Heart left ventricle (tissue), 16 donors: ENCODE measurements at regions of chr3 and their contacts with region 1.

Region 1: DNA sequence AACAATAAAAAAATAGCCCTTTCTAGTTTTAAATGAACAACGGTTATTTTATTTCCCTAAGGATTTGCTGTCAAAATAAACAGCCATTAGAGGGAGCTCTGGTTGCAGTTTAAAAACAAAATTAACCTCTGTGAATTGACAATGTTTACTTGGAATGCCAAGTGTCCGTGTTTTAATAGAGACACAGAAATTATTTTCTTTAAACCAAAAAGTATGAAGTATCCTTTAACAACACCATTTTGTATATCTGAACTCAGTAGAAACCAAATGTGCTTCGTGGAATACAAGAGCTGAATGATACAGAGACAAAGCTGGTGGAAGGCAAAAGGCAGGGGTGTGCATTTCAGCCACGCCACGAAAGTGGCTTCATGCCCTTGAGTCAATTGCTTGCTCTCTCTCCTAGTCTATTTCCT is 74.4 kb downstream of the MOBP start:
- DNase-seq: no peak
- ATAC-seq: no peak
- H3K4me3 ChIP-seq: peak overlapping the region in 4 of 12 donors; percentile 17 to 32 (median 22)
- H3K27ac ChIP-seq: no peak overlapping the region
- H3K4me1 ChIP-seq: peaks cover 0 to 8% (median 0%) of the 10 kb centered on the region in 12 donors
- H3K27me3 ChIP-seq: no peaks in the 10 kb centered on the region
- CTCF ChIP-seq: peak in 11 of 12 donors; percentile 25 to 59 (median 52)
- POLR2A ChIP-seq: no peak

Region 2: GRCh38 chr3:39707314-39707909 is 165.5 kb after region 1 on chr3:
- intact Hi-C with region 1: loop called in 1 of 10 experiments (anchors 5 kb)
- DNase-seq: no peak
- ATAC-seq: no peak
- H3K4me3 ChIP-seq: no peak overlapping the region
- H3K27ac ChIP-seq: no peak overlapping the region
- H3K4me1 ChIP-seq: no peaks in the 10 kb centered on the region
- H3K27me3 ChIP-seq: no peaks in the 10 kb centered on the region
- CTCF ChIP-seq: peak; percentile 48 to 76 (median 72)
- POLR2A ChIP-seq: no peak

Region 3: GRCh38 chr3:40191850-40192448 is 650.0 kb after region 1 on chr3:
- intact Hi-C with region 1: loop called in 1 of 10 experiments (anchors 10 kb)
- DNase-seq: peak in 4 of 5 donors; percentile 44 to 53 (median 46)
- ATAC-seq: peak in 3 of 4 donors; percentile 47 to 62 (median 56)
- H3K4me3 ChIP-seq: no peak overlapping the region
- H3K27ac ChIP-seq: no peak overlapping the region
- H3K4me1 ChIP-seq: peaks cover 0 to 25% (median 4%) of the 10 kb centered on the region in 12 donors
- H3K27me3 ChIP-seq: no peaks in the 10 kb centered on the region
- CTCF ChIP-seq: peak; percentile 93 to 98 (median 97)
- POLR2A ChIP-seq: no peak